K562 (cell line): ENCODE measurements at regions of chr9 and their contacts with region 1.

Region 1: DNA sequence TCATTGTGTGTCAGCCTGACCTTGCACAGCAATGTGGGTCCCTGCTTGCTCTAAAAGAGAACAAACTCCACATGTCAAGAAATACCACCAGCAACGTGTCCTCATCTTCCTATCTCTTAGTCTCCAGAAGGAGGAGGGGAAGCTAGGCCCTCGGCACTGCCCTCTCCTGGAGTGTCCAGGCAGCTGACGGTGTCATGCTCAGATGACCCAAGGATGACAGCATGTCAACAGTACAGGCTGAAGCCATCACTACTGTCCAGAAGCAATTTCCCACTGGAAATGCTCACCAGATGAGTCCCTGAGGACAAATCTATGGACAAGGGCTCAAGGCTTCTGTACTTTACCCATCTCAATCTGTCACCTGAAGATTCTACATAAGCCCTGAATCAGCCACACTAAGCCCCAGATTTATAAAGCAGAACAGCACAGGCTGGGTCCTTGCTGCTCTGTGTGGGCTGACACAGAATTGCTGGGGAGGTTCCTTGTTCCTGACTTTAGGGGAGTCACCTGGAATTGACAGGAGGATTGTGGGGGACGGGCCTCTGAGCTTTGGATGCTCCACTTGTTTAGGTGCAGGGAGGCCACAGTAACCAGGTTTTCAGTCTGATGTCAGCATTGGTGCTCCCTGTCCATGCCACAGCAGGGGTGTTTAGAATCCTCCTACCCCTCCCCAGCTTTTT is 210.2 kb downstream of the DAB2IP start:
- DNase-seq: peak; percentile 49 to 61 (median 57)
- ATAC-seq: peak; percentile 99
- H3K4me3 ChIP-seq: no peak overlapping the region
- H3K27ac ChIP-seq: no peak overlapping the region
- H3K4me1 ChIP-seq: no peaks in the 10 kb centered on the region
- H3K27me3 ChIP-seq: peaks cover 3 to 42% of the 10 kb centered on the region in 2 experiments
- CTCF ChIP-seq: peak; percentile 75 to 84 (median 77)
- EP300 ChIP-seq: no peak
- POLR2A ChIP-seq: no peak
- RAD21 ChIP-seq: peak; percentile 44 to 76

Region 2: GRCh38 chr9:121634329-121635261 is 227.0 kb before region 1 on chr9:
- CTCF ChIA-PET with region 1: no interaction called
- POLR2A ChIA-PET with region 1: no interaction called
- in situ Hi-C with region 1: no loop called
- intact Hi-C with region 1: loop called (anchors 5 kb)
- DNase-seq: peak; percentile 55 to 67 (median 63)
- ATAC-seq: peak; percentile 95
- H3K4me3 ChIP-seq: no peak overlapping the region
- H3K27ac ChIP-seq: no peak overlapping the region
- H3K4me1 ChIP-seq: peaks cover 0 to 6% of the 10 kb centered on the region in 2 experiments; a peak in 2 of 5 replicates
- H3K27me3 ChIP-seq: peaks cover 0 to 51% of the 10 kb centered on the region in 2 experiments; a peak in 3 of 5 replicates
- CTCF ChIP-seq: peak; percentile 73 to 78 (median 77)
- EP300 ChIP-seq: no peak
- POLR2A ChIP-seq: no peak
- RAD21 ChIP-seq: peak; percentile 55 to 68

Region 3: GRCh38 chr9:121929893-121930875 is 68.5 kb after region 1 on chr9:
- CTCF ChIA-PET with region 1: no interaction called
- POLR2A ChIA-PET with region 1: no interaction called
- in situ Hi-C with region 1: no loop called
- intact Hi-C with region 1: no loop called
- DNase-seq: peak; percentile 14 to 22 (median 14)
- ATAC-seq: peak; percentile 84
- H3K4me3 ChIP-seq: no peak overlapping the region
- H3K27ac ChIP-seq: no peak overlapping the region
- H3K4me1 ChIP-seq: no peaks in the 10 kb centered on the region
- H3K27me3 ChIP-seq: peaks cover 13 to 28% of the 10 kb centered on the region in 2 experiments
- CTCF ChIP-seq: peak; percentile 42 to 55 (median 52); a peak in 5 of 6 replicates
- EP300 ChIP-seq: no peak
- POLR2A ChIP-seq: no peak
- RAD21 ChIP-seq: peak in 1 of 2 experiments; percentile 59; a peak in 2 of 4 replicates

Region 4: GRCh38 chr9:122015170-122015821 is 153.7 kb after region 1 on chr9:
- CTCF ChIA-PET with region 1: no interaction called
- POLR2A ChIA-PET with region 1: no interaction called
- in situ Hi-C with region 1: no loop called
- intact Hi-C with region 1: no loop called
- DNase-seq: no peak
- ATAC-seq: no peak
- H3K4me3 ChIP-seq: no peak overlapping the region
- H3K27ac ChIP-seq: no peak overlapping the region
- H3K4me1 ChIP-seq: no peaks in the 10 kb centered on the region
- H3K27me3 ChIP-seq: no peaks in the 10 kb centered on the region; a peak in 1 of 5 replicates
- CTCF ChIP-seq: no peak
- EP300 ChIP-seq: no peak
- POLR2A ChIP-seq: no peak
- RAD21 ChIP-seq: no peak